ENCODE measurements at regions of chr10 and their contacts with region 1.

Region 1: DNA sequence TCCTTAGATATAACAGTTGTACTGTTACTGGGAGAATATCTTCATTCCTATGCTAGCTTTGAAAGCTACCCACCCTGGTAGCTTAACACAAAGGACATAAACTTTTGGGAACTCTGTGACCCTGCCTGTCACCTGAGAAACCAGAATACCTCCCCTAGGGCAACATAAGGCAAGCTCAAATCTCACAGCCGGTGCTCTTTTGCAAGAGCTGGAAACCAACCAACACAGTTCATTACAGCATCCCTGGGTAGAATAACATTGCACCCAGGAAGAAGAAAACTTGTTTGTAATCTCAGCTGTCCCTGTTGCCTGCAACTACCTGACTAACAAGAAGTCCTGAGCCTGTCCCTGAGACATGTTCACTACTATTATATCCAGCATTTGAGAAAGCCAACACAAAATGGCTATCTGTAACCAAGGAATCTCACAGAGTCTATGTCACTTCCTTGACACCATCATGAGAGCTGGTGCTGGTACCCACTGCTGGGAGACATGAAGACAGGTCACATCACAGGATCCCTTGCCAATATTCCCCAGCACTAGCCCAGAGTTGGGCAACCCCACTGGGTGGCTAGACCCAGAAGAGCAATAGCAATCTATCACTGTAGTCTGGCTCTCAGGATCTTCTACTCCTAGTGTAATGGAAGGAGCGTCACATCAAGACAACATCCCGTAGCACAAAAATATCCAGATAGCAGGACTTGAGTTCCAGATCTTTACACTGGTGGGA is 31.3 kb downstream of the AKR1C3 start:
- DNase-seq: peak; percentile 37 to 72
- H3K4me3 ChIP-seq: no peak overlapping the region
- H3K27ac ChIP-seq: 0 out of 2 replicates have a peak overlapping the region, but pooled peaks have one; percentile 14
- H3K4me1 ChIP-seq: peaks cover 9% of the 10 kb centered on the region
- H3K27me3 ChIP-seq: no peaks in the 10 kb centered on the region
- CTCF ChIP-seq: no peak

Region 2: GRCh38 chr10:3516234-3516922 is 1609.1 kb before region 1 on chr10:
- CTCF ChIA-PET with region 1: no interaction called
- POLR2A ChIA-PET with region 1: no interaction called
- intact Hi-C with region 1: no loop called
- DNase-seq: no peak
- H3K4me3 ChIP-seq: no peak overlapping the region
- H3K27ac ChIP-seq: no peak overlapping the region
- H3K4me1 ChIP-seq: no peaks in the 10 kb centered on the region
- H3K27me3 ChIP-seq: no peaks in the 10 kb centered on the region
- CTCF ChIP-seq: no peak

Region 3: DNA sequence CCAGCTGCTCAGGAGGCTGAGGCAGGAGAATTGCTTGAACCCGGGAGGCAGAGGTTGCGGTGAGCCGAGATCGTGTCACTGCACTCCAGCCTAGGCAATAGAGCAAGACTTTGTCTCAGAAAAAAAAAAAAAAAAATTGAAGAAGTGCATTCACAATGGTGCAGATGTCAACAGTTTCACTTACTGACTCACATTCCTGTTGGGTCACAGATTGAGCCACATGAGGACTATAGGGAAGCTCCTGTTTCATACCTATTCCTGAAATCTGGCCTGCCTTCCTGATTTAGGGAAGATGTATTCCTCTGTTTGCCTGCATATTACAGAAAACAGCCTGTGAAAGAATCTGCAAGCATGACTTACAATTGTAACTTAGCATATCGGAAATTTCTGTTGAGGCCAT is 149.3 kb after region 1 on chr10:
- CTCF ChIA-PET with region 1: no interaction called
- POLR2A ChIA-PET with region 1: interaction called, 10 read pairs
- intact Hi-C with region 1: no loop called
- DNase-seq: no peak
- H3K4me3 ChIP-seq: no peak overlapping the region
- H3K27ac ChIP-seq: no peak overlapping the region
- H3K4me1 ChIP-seq: no peaks in the 10 kb centered on the region; the same call in 1 of the 2 replicates
- H3K27me3 ChIP-seq: no peaks in the 10 kb centered on the region
- CTCF ChIP-seq: no peak